ENCODE measurements at regions of chr2 and their contacts with region 1.

Region 1: DNA sequence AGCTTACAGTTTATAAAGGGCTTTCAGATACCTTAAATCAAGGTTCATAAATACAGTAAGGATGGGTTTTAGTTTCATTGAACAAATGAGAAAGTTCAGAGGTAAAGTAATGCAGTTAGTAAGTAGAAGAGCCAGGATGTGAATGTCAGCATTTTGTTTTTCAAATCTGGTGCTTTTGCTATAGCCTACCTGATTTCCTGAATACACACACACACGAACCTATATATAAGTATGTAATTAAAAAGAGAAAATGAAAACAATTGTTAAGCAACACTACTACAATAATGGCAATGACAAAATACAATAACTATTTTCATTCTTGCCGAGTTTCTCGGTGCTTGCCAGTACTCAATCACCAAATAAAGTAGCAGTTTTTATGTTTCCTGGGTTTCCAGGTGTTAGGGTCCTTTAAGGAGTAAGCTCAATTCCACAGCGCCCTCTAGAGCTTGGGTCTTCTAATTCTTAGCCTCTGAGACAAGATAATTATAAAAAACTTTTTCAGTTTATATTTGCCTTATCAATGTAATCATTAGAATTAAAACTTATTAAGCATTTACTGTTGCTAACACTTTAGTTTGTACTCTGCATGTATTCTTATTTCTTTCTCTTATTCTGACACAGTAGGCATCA is 512.9 kb upstream of the ACVR2A start:
- DNase-seq: peak; percentile 7
- CTCF ChIP-seq: peak; percentile 39

Region 2: DNA sequence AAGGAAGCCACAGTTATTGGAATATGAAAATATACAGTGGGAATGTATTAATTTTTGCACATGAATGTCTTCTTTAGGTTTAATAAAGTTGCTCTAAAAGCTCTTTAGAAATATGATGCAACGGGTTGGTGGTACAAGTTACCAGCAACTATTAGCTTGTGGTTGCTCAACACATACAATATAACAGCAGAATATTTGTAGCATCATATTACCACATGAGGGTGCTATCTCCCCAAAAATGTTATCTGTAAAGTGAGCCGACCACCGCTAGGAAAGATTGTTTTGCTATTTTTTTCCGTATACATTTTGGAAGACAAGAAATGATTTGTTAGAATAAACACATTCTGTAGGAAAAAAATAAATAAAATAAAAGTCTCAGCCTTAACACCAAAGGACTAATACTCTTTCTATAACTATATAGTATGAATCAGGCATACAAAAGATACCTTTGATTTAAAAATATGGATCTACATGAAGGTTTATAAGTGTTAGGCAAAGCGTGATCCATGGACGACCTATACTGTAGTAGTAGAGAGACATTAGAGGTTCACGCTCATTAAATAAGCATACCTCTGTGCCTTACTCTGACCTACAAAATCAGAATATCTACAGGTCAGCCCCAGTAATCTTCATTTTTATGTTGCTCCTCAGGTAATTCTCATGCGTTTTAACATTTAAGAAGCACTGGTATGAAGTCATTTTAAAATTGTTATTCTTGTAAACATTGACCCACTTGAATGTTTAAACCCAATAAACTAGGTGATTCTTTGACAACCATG is 597.7 kb before region 1 on chr2:
- in situ Hi-C with region 1: no loop called
- DNase-seq: peak; percentile 12
- CTCF ChIP-seq: peak; percentile 6

Region 3: GRCh38 chr2:147082850-147083522 is 248.9 kb before region 1 on chr2:
- in situ Hi-C with region 1: loop called (anchors 10 kb)
- DNase-seq: peak; percentile 31
- CTCF ChIP-seq: peak; percentile 74

Measured in GM13976 (cell line).